ENCODE measurements at regions of chr12 and their contacts with region 1.

Region 1: GRCh38 chr12:111444925-111445725 is 39.4 kb downstream of the SH2B3 start:
- DNase-seq: peak; percentile 55 to 83 (median 74)
- ATAC-seq: peak; percentile 95
- H3K4me3 ChIP-seq: peak overlapping the region; percentile 6
- H3K4me3 Mint-ChIP-seq: peak overlapping the region; percentile 46 to 77 (median 68)
- H3K27ac ChIP-seq: peak overlapping the region; percentile 77
- H3K27ac Mint-ChIP-seq: peak overlapping the region; percentile 83 to 99 (median 91)
- H3K4me1 ChIP-seq: peaks cover 34 to 59% of the 10 kb centered on the region in 2 donors
- H3K4me1 Mint-ChIP-seq: peaks cover 36 to 91% (median 71%) of the 10 kb centered on the region in 7 donors
- H3K27me3 ChIP-seq: no peaks in the 10 kb centered on the region
- H3K27me3 Mint-ChIP-seq: no peaks in the 10 kb centered on the region

Region 2: DNA sequence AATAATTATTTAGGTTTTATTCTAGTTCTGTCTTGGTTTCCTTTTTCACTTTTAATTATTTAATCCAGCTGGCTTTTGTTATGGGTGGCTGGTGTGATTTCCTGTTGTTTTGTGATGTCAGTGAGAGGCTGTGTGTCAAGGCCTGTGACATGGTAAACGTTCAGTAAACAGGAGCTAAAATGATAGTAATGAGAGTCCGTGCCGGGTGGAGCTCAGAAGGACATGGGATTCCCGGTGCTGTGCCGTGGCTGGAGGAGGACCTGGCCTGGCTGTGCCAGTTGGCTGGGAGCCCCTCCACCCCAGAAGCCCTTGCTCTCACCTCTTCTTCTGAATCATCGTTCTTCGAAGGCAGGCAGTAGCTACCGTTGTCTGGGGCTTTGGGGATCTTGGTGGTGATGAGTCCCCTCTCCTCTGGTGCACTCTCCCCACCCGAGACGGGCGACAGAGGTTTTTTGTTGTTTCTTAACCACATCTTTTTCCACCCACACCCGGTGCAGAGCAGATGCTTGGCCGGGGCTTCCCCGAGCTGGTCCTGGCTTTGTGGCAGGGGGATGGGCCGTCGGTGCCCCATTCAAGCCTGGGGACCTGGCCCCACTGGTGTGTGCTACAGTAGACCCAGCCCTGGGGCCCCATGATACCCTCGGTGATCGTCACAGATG is 10.3 kb before region 1 on chr12:
- CTCF ChIA-PET with region 1: interaction called, 32 read pairs
- POLR2A ChIA-PET with region 1: interaction called, 36 read pairs
- intact Hi-C with region 1: loop called (anchors 1 kb)
- DNase-seq: peak; percentile 62 to 94 (median 83)
- ATAC-seq: peak; percentile 83
- H3K4me3 ChIP-seq: peak overlapping the region; percentile 56
- H3K4me3 Mint-ChIP-seq: peak overlapping the region; percentile 68 to 88 (median 85)
- H3K27ac ChIP-seq: peak overlapping the region; percentile 94
- H3K27ac Mint-ChIP-seq: peak overlapping the region; percentile 97 to 99 (median 99)
- H3K4me1 ChIP-seq: peaks cover 84% of the 10 kb centered on the region in 2 donors
- H3K4me1 Mint-ChIP-seq: peaks cover 79 to 96% (median 91%) of the 10 kb centered on the region in 7 donors
- H3K27me3 ChIP-seq: no peaks in the 10 kb centered on the region
- H3K27me3 Mint-ChIP-seq: no peaks in the 10 kb centered on the region